Activated CD4-positive, alpha-beta memory T cell treated with anti-CD3 and anti-CD28 coated beads, Interleukin-2, amount 10 ng/mL, durations not matched to agents 7 days and 5 days (primary cell): ENCODE measurements at regions of chr7 and their contacts with region 1.

Region 1: DNA sequence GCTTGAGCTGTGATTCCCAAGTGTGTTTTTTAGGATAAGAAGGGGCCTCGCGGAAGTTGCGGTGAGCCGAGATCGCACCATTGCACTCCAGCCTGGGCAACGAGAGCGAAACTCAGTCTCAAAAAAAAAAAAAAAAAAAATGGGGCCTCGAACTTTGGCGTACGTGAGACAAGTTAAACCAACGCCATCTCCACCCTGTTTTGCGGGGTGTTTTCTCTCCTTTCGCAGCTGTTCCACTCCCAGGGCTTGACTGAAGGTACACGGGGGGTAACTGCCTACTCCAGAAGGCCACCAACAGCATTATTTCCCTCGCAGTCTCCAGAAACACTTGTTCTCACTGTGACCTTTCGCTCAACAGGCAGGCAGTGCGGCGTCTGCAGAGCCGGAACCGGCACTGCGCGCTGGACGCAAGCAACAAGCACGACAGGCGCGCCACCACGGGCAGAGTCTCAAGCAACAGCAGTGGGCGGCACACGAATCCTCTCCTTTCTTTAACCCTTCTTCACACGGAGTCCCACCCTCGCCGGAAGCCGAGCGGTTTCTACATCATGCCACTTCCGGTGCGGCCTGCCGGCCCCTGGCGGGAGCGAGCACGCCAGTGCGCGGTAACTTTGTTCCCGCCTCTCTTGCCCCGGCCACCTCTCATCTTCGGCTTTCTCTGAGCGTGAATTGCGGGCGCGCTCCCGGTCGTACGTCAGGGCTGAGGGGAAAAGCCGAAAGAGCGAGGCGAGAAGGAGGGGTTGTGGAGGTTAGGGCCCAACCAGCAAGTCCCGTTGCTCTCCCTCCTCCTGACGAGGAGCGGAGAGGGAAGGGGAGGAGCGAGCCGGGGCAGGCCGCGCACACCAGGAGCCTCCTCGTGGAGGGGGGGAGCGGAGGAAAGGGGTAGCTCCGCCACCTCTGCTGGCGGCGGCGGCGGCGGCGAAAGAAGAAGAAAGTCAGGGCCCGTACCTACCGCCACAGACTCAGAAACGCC is 814 bp upstream of the CDK13 start:
- DNase-seq: peak; percentile 99
- H3K4me3 Mint-ChIP-seq: peak overlapping the region; percentile 97
- H3K27ac Mint-ChIP-seq: peak overlapping the region; percentile 100
- H3K4me1 Mint-ChIP-seq: peaks cover 35% of the 10 kb centered on the region
- H3K27me3 Mint-ChIP-seq: no peaks in the 10 kb centered on the region

Region 2: DNA sequence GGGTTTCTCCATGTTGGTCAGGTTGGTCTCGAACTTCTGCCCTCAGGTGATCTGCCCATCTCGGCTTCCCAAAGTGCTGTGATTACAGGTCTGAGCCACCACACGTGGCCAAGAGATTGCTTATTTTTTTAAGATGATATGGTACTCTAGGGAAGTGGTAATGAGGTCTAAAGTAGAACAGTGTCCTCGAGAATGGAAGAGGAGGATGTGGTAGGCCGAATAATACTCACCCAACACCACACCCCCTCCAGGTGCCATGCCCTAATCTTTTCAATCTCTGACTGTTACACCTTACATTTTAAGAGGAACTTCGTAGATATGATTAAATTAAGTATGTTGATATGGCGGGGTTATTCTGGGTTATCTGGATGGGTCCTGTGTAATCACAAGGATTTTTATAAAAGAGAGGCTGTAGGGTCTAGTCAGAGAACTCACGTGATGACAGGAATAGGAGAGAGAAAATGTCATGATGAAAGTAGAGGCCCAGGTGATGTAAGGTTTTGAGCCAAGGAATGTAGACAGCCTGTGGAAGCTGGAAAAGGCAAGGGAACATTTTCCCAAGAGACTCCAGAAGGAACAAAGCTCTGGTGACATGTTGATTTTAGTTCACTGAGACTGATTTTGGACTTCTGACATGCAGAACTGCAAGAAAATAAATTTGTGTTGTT is 30.3 kb after region 1 on chr7:
- CTCF ChIA-PET with region 1: no interaction called
- POLR2A ChIA-PET with region 1: interaction called, 19 read pairs
- DNase-seq: peak; percentile 47
- H3K4me3 Mint-ChIP-seq: no peak overlapping the region
- H3K27ac Mint-ChIP-seq: no peak overlapping the region
- H3K4me1 Mint-ChIP-seq: peaks cover 8% of the 10 kb centered on the region
- H3K27me3 Mint-ChIP-seq: no peaks in the 10 kb centered on the region

Region 3: DNA sequence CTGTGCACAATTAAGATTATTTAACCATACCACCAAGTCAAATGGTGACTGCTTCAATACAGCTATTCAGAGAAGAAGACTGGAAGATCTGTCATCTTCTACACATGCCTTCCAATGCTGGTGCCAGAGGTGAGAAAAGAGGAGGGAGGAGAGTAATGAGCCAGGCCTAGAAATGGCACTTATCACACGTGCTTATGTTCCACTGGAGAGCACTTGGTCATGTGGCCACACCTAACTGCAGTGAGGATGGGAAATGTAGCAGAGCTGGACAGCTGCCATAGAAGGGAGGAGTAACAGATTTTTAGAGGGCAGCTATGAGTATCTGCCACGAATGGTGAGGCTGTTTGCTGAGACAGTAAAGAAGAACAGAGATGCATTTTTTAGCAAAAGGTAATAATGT is 108.0 kb after region 1 on chr7:
- CTCF ChIA-PET with region 1: interaction called, 29 read pairs
- POLR2A ChIA-PET with region 1: interaction called, 12 read pairs
- DNase-seq: no peak
- H3K4me3 Mint-ChIP-seq: no peak overlapping the region
- H3K27ac Mint-ChIP-seq: no peak overlapping the region
- H3K4me1 Mint-ChIP-seq: peaks cover 3% of the 10 kb centered on the region
- H3K27me3 Mint-ChIP-seq: no peaks in the 10 kb centered on the region

Region 4: GRCh38 chr7:40093631-40094350 is 144.5 kb after region 1 on chr7:
- CTCF ChIA-PET with region 1: no interaction called
- POLR2A ChIA-PET with region 1: no interaction called
- DNase-seq: no peak
- H3K4me3 Mint-ChIP-seq: no peak overlapping the region
- H3K27ac Mint-ChIP-seq: no peak overlapping the region
- H3K4me1 Mint-ChIP-seq: no peaks in the 10 kb centered on the region
- H3K27me3 Mint-ChIP-seq: no peaks in the 10 kb centered on the region

Region 5: DNA sequence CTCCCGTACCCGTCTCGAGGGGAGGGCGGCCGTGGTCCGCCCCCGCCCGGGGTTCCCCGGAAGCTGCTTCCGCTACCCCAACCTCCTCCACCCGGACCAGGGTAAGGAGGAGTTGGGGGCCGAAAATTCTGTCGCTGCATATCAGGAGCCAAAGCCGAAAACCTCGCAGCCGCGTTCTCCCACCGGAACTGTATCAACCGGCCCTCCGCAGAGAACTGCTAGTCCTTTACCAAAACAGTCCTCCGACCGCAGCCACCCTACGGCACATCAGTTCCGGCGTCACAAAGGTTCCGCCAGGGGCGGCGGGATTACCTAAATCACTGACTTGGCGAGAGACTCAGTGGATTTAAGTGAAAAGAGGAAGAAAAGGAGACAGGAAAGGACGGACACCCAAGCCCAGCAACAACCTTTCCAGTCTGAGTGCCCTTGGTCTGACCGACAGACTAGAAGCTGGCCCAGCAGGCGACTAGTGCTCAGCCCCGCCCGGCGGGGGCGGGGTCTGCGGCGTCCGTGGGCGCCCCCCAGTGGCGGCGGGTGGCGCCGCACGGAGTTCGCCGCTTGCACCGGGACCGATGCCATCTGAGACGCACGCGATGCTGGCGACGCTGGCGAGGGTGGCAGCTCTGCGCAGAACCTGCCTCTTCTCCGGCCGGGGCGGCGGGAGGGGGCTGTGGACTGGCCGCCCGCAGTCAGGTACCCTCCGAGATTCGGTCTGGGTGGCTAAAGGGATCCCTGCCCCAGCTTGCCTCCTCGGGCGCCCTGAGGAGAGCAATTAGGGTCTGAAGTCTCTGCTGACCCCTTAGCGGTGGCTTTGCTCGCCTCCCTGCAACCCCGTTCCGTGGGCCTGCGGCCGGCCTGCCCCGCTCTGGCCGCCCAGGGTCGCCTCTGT is 185.4 kb after region 1 on chr7 and contains the starts of genes MPLKIP and SUGCT:
- CTCF ChIA-PET with region 1: no interaction called
- POLR2A ChIA-PET with region 1: interaction called, 45 read pairs
- DNase-seq: peak; percentile 86
- H3K4me3 Mint-ChIP-seq: peak within 1 kb of the TSS; percentile 92
- H3K27ac Mint-ChIP-seq: peak within 1 kb of the TSS; percentile 95
- H3K4me1 Mint-ChIP-seq: peaks cover 21% of the 10 kb centered on the region
- H3K27me3 Mint-ChIP-seq: peaks cover 6% of the 10 kb centered on the region
- total RNA-seq, gene MPLKIP: 34.4 to 35.1 TPM
- total RNA-seq, gene SUGCT: not detected